ENCODE measurements at regions of chr9 and their contacts with region 1.

Region 1: DNA sequence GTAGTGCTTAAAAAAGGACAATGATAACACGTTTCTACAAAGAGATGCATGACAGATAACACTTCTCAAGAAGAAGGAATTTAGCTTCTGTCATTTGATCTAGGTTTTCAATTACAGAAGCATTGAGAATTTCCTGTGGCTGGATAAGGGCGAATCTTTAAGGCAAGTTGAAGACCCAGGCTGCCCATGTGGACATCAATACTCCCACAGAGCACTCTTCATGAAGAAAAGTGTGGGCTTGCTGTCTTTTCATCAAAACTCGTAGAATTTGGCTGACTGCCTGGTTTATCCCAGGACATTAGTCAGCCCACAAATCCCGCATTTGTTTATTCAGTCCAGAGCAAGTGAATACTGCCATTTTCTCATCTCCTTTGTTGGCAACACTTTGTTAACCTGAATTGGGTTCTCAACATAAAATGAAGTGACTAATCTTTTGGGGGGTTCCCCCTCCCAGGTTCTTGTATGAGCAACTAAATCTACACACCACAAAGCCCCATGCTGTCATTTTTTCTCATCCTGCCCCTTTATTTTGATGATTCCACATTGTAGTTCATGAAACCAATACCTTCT is 43.4 kb upstream of the CDKN2B start:
- DNase-seq: no peak
- ATAC-seq: peak in 2 of 4 donors; percentile 20 to 23
- H3K4me3 ChIP-seq: no peak overlapping the region
- H3K27ac ChIP-seq: no peak overlapping the region
- H3K4me1 ChIP-seq: peaks cover 11% of the 10 kb centered on the region
- H3K27me3 ChIP-seq: no peaks in the 10 kb centered on the region
- CTCF ChIP-seq: no peak

Region 2: GRCh38 chr9:21806644-21807043 is 245.8 kb before region 1 on chr9:
- intact Hi-C with region 1: loop called in 1 of 2 experiments (anchors 5 kb)
- DNase-seq: no peak
- ATAC-seq: no peak
- H3K4me3 ChIP-seq: no peak overlapping the region
- H3K27ac ChIP-seq: no peak overlapping the region
- H3K4me1 ChIP-seq: peaks cover 10% of the 10 kb centered on the region
- H3K27me3 ChIP-seq: no peaks in the 10 kb centered on the region
- CTCF ChIP-seq: no peak

Region 3: DNA sequence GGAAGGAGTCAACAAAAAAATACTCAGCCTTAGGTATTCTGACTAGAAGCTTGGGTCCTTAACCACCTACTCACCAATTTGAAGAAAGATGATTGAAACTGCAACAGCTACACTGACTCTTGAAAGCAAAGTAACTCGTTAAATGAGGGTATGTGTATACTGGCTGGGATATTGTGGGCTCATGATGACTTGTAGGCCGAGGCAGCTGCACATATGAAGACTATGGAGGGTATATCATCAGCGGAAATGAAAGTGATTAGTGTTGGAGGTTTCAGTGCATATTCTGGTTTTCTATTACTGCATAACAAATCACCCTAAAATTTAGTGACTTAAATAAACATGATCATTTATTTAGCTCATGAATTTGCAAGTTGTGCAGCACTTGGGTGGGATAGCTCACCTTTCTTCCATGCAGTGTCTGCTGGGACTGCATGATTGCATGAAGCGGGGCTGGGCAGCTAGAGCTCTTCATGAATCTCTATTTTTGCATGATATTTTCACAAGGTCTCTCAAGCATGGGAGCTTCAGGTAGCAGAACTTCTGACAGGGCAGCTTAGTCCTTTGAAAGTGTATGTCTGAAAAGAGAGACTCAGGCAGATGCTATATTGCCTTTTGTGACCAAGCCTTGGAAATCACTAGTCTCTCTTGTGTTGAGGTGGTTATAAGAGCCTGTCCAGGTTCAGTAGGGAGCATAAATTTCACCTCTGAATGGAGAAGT is 52.7 kb after region 1 on chr9:
- intact Hi-C with region 1: loop called in 1 of 2 experiments (anchors 5 kb)
- DNase-seq: no peak
- ATAC-seq: no peak
- H3K4me3 ChIP-seq: no peak overlapping the region
- H3K27ac ChIP-seq: no peak overlapping the region
- H3K4me1 ChIP-seq: peaks cover 23% of the 10 kb centered on the region
- H3K27me3 ChIP-seq: no peaks in the 10 kb centered on the region
- CTCF ChIP-seq: no peak